ENCODE measurements at regions of chr17 and their contacts with region 1.

Region 1: DNA sequence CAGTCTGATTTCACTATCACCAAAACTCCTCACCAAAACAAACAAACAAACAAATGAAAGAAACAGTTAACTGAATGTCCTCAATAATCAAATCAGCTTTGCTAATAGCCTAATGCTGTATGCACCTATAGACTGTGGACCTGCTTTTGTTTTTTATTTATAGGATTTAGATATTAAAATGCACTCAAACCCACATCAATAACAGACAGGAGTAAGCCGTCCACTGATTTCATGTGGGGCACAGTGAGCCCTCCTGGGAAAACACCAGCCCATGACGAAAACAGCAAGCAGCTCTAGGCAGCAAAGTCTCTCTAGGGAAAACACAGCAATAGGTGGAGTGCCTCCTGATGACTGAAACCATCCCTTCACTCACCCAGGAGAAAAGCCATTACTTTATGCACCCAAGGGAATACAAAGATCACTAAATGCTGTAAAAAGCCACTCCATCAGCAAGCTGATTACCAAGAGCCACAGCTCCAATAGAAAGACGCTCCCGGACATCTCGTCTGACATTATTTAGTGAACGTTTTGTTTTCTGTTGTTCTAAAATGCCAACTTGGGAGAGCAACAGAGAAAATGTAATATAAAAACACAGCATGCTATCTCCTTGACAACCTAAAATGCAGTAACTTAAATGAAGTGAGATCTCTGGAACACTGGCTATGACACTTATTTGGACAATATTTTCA is 47.8 kb downstream of the ANKFY1 start:
- DNase-seq: no peak
- ATAC-seq: no peak
- H3K4me3 ChIP-seq: no peak overlapping the region
- H3K4me3 Mint-ChIP-seq: no peak overlapping the region
- H3K27ac ChIP-seq: no peak overlapping the region
- H3K27ac Mint-ChIP-seq: peak overlapping the region; percentile 22 to 75
- H3K4me1 ChIP-seq: peaks cover 2% of the 10 kb centered on the region
- H3K4me1 Mint-ChIP-seq: peaks cover 7 to 8% of the 10 kb centered on the region in 2 donors
- H3K27me3 ChIP-seq: no peaks in the 10 kb centered on the region
- H3K27me3 Mint-ChIP-seq: no peaks in the 10 kb centered on the region
- CTCF ChIP-seq: no peak

Region 2: GRCh38 chr17:4304417-4305027 is 88.5 kb after region 1 on chr17:
- intact Hi-C with region 1: loop called (anchors 1 kb)
- DNase-seq: peak in 1 of 2 donors; percentile 83
- ATAC-seq: peak; percentile 75 to 82 (median 79)
- H3K4me3 ChIP-seq: no peak overlapping the region
- H3K4me3 Mint-ChIP-seq: no peak overlapping the region
- H3K27ac ChIP-seq: no peak overlapping the region
- H3K27ac Mint-ChIP-seq: no peak overlapping the region
- H3K4me1 ChIP-seq: peaks cover 4% of the 10 kb centered on the region
- H3K4me1 Mint-ChIP-seq: peaks cover 17 to 23% of the 10 kb centered on the region in 2 donors
- H3K27me3 ChIP-seq: no peaks in the 10 kb centered on the region
- H3K27me3 Mint-ChIP-seq: no peaks in the 10 kb centered on the region
- CTCF ChIP-seq: peak; percentile 89